ENCODE measurements at regions of chr10 and their contacts with region 1.

Region 1: DNA sequence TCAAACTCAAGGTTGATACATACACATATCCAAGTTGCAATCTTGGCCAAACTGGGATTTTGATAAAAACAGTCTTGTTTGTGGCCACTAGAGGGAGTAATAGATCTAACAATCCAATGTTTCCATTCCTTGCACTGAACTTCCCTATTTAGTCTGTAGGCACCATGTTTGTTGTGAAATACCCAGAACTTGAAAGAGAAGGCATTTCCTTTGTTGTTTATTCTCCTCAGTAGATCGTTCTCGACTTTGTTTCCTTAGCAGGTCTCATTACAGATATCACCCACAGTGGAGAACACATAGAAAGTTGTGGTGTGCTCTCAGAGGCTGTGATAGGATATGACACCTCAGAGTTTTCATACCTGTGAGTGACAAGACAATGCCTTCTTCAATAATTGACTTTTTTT is 70.3 kb upstream of the MXI1 start:
- DNase-seq: no peak
- H3K4me3 Mint-ChIP-seq: no peak overlapping the region
- H3K27ac Mint-ChIP-seq: peak overlapping the region; percentile 6
- H3K4me1 Mint-ChIP-seq: peaks cover 37% of the 10 kb centered on the region
- H3K27me3 Mint-ChIP-seq: no peaks in the 10 kb centered on the region

Region 2: DNA sequence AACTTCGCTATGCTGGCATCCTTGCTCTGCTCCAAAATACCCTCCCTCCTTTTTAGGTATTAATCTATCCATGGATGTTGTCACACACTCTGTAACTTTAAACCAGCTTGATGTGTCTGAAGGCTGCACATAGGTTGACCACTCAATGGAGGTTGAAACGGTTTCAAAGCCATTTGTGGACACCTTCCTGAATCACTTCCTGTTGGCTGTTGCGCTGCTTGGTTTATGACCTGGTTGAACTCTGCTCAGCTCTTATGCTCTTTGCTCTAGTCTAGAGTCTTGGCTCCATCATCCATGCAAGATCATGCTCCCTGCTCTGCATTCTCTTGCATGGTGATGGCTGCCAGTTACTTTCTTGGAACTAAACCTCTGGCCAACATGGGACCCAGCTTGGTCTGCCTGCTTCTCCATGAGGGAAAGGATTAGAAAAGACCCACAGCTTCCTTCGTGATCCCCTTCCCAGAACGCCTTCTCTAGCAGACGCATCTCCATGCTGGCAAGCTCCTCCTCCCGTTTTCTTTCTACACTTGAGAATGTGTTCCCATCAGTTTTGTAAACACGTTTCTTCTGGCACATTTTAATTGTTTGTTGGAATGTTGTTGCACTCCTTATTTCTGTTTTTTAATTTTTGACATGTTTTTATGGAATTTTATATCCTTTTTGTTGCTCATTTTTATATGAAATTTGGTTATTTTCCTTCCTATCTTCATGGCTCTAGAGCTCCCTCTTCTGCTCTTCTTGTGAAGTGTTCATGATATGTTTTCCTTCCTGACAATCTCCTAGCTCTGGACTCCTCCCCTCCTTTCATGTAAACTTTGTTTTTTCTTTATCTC is 363.6 kb before region 1 on chr10:
- CTCF ChIA-PET with region 1: no interaction called
- POLR2A ChIA-PET with region 1: no interaction called
- intact Hi-C with region 1: no loop called
- DNase-seq: no peak
- H3K4me3 Mint-ChIP-seq: no peak overlapping the region
- H3K27ac Mint-ChIP-seq: no peak overlapping the region
- H3K4me1 Mint-ChIP-seq: no peaks in the 10 kb centered on the region
- H3K27me3 Mint-ChIP-seq: no peaks in the 10 kb centered on the region

Region 3: DNA sequence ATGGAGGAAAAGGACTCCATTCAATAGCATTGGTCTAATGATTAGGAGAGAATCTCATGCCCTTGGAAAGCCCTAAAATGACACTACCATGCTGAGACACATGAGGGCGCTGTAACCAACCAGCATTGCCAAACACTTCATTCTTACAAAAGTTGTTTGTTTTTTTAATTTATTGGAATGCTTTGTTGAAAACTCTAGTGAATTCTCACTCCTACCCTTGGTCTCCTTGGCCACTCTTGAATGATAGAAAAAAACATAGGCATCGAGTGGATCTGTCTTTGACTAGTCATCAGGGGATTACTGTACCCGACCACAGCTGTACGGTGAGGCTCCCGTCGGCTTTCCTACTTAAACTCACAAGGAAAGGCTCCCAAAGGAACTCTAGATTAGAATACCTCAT is 158.7 kb before region 1 on chr10:
- CTCF ChIA-PET with region 1: interaction called, 17 read pairs
- POLR2A ChIA-PET with region 1: no interaction called
- intact Hi-C with region 1: loop called (anchors 2 kb)
- DNase-seq: peak; percentile 76
- H3K4me3 Mint-ChIP-seq: no peak overlapping the region
- H3K27ac Mint-ChIP-seq: no peak overlapping the region
- H3K4me1 Mint-ChIP-seq: peaks cover 4% of the 10 kb centered on the region
- H3K27me3 Mint-ChIP-seq: no peaks in the 10 kb centered on the region

Region 4: GRCh38 chr10:110069502-110069982 is 67.6 kb before region 1 on chr10:
- CTCF ChIA-PET with region 1: no interaction called
- POLR2A ChIA-PET with region 1: no interaction called
- intact Hi-C with region 1: no loop called
- DNase-seq: no peak
- H3K4me3 Mint-ChIP-seq: peak overlapping the region; percentile 65
- H3K27ac Mint-ChIP-seq: peak overlapping the region; percentile 88
- H3K4me1 Mint-ChIP-seq: peaks cover 87% of the 10 kb centered on the region
- H3K27me3 Mint-ChIP-seq: no peaks in the 10 kb centered on the region

Region 5: DNA sequence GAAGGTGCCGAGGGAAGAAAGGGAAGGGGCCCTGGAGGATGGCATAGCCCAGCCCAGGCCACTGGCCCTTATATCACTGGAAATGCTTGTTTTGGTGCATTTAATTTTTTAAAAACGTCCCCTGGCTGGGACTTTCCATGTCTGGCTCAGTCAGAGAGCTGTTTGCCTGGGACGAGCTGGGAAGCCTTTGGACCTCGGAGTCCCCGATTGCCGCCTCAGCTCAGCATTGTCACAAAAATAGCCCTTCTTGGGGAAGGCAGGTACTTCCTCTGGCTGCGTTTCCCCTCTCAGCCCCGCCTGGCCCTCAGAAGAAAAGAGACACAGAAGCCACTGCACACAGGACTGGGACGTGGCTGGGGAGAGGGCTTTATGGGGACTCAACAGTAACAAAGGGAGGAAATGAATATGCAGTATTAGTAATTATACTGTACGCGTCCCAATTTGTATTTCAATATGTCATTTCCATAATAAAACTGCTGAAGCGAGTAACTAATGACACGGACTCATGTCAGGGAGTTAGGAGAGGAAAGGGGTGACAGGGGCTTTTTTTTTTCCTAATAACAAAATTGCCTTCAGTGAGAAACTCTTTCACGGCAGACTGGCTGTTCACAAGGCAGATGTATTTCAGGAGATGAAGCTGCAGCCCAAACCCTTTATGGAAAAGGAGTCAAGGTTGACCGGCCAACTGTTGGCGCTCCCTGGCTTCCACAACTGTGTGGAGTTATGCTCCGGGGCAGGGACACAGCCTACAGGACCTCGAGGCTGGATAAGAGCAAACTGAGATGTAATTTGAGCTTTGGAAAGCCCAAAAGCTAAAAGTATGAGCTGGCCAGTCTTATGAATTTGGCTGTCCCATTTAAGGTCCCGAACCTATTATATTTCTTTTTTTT is 39.2 kb after region 1 on chr10:
- CTCF ChIA-PET with region 1: interaction called, 10 read pairs
- POLR2A ChIA-PET with region 1: no interaction called
- intact Hi-C with region 1: no loop called
- DNase-seq: no peak
- H3K4me3 Mint-ChIP-seq: no peak overlapping the region
- H3K27ac Mint-ChIP-seq: no peak overlapping the region
- H3K4me1 Mint-ChIP-seq: peaks cover under 1% of the 10 kb centered on the region
- H3K27me3 Mint-ChIP-seq: peaks cover 30% of the 10 kb centered on the region

Region 6: GRCh38 chr10:110241407-110241806 is 104.3 kb after region 1 on chr10:
- CTCF ChIA-PET with region 1: interaction called, 11 read pairs
- POLR2A ChIA-PET with region 1: no interaction called
- intact Hi-C with region 1: no loop called
- DNase-seq: no peak
- H3K4me3 Mint-ChIP-seq: no peak overlapping the region
- H3K27ac Mint-ChIP-seq: no peak overlapping the region
- H3K4me1 Mint-ChIP-seq: peaks cover 30% of the 10 kb centered on the region
- H3K27me3 Mint-ChIP-seq: peaks cover 2% of the 10 kb centered on the region

Region 7: DNA sequence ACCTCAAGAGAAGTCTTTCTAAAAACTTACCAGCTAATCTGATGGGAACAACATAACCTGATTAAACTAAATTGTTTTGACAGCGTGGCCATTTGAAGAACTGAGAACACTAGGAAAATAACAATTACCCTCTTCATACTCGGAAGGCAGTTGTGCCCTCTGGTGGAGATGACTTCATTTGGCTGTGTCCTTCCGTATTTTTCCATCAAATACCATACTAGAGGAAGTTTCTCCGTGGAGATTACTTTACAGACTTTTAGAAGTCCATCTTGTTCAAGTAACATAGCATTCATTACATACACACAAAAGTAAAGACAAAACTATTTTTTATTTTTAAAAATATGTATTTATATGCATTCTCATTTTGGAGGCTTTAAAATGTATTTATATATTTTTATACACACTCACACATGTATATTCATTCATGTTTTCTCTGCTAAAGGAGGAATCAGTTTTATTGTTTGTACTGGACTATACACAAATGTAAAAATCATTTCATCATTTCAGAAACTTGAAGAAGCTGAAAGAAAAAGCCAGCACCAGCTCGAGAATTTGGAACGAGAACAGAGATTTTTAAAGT is 142.4 kb after region 1 on chr10:
- CTCF ChIA-PET with region 1: interaction called, 60 read pairs
- POLR2A ChIA-PET with region 1: no interaction called
- intact Hi-C with region 1: loop called (anchors 1 kb)
- DNase-seq: peak; percentile 54
- H3K4me3 Mint-ChIP-seq: no peak overlapping the region
- H3K27ac Mint-ChIP-seq: no peak overlapping the region
- H3K4me1 Mint-ChIP-seq: peaks cover 19% of the 10 kb centered on the region
- H3K27me3 Mint-ChIP-seq: no peaks in the 10 kb centered on the region

Region 8: DNA sequence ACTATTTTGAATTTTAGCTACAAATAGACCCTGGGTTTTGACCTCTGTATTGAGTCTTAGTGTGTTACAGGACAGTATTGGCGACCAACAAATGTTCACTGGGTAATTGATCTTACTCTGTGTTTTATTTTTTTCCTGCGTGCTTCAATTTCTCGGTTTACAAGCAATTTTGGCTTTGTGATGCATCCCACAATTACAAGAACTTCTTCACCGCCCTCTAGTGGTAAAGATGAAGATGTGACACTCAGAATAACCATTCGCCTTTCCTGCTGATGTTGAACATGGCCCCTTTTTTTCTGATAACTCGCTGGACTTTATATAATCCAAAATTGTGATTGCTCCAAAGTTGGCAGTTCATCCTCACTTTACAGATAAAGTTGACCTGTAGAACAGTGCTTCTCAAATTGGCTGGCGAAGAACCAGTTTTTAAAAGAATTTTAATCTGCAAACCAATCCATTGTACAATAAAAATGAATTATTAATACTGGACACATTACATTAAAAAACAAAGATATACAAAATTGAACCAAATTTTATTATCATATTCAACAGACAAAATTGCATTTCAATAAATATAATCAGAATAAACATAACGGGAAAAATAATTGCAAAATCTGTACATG is 410.1 kb after region 1 on chr10:
- CTCF ChIA-PET with region 1: no interaction called
- POLR2A ChIA-PET with region 1: no interaction called
- intact Hi-C with region 1: loop called (anchors 10 kb)
- DNase-seq: no peak
- H3K4me3 Mint-ChIP-seq: no peak overlapping the region
- H3K27ac Mint-ChIP-seq: no peak overlapping the region
- H3K4me1 Mint-ChIP-seq: peaks cover 10% of the 10 kb centered on the region
- H3K27me3 Mint-ChIP-seq: peaks cover 12% of the 10 kb centered on the region

Measured in activated CD4-positive, alpha-beta memory T cell treated with anti-CD3 and anti-CD28 coated beads for 36 hours (primary cell).